CD4-positive, alpha-beta T cell (primary cell): ENCODE measurements at regions of chr6 and their contacts with region 1.

Region 1: DNA sequence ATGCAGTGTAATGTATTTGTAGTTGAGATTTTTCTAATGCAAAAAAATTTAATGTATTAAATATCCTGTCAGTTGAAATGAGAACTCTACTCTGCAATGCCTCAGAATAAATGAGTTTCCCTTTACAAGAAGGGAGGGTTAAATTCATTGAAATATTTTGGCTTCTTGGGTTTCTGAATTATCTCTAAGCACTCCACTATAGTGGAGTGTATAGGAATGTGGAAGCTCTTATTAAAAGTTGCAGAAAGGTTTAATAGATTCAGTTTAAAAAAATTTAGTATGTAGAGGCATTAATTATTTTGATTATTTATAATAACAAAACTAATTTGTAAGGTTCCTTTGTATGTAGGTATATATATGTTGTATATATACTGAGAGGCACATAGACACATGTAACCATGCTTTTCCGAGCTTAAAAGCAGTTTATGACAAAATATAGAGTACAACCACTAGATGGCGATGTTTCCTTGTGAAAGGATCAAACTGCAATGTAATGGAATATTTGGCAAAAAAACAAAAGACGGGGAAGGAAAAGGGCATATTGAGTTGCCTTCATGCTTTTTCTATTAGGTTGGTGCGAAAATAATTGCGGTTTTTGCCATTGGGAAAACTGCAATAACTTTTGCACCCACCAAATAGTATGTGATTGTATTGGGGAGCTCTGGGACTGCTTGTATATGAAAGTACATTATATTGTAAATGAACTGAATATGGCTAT is 144.2 kb downstream of the MYO6 start:
- DNase-seq: peak in 3 of 14 experiments; percentile 46 to 51 (median 48)
- ATAC-seq: no peak
- H3K4me3 ChIP-seq: no peak overlapping the region
- H3K4me3 Mint-ChIP-seq: no peak overlapping the region
- H3K27ac ChIP-seq: no peak overlapping the region
- H3K27ac Mint-ChIP-seq: no peak overlapping the region
- H3K4me1 ChIP-seq: no peaks in the 10 kb centered on the region
- H3K4me1 Mint-ChIP-seq: no peaks in the 10 kb centered on the region
- H3K27me3 ChIP-seq: no peaks in the 10 kb centered on the region
- H3K27me3 Mint-ChIP-seq: peaks cover 5% of the 10 kb centered on the region
- CTCF ChIP-seq: peak; percentile 77

Region 2: DNA sequence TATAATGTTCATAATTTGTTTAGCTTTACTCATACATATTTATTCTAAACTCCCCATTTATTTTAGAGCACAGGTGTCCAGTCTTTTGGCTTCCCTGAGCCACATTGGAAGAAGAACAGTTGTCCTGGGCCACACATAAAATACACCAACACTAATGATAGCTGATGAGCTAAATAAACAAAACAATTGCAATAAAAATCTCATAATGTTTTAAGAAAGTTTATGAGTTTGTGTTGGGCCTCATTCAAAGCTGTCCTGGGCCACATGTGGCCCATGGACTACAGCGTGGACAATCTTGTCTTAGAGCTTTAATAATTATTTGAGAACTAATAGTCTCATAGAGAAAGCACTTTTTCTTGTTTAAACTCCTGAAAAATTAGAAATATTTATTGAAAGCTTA is 12.9 kb before region 1 on chr6:
- CTCF ChIA-PET with region 1: interaction called, 11 read pairs
- POLR2A ChIA-PET with region 1: no interaction called
- intact Hi-C with region 1: no loop called
- DNase-seq: no peak
- ATAC-seq: no peak
- H3K4me3 ChIP-seq: no peak overlapping the region
- H3K4me3 Mint-ChIP-seq: no peak overlapping the region
- H3K27ac ChIP-seq: no peak overlapping the region
- H3K27ac Mint-ChIP-seq: no peak overlapping the region
- H3K4me1 ChIP-seq: no peaks in the 10 kb centered on the region
- H3K4me1 Mint-ChIP-seq: no peaks in the 10 kb centered on the region
- H3K27me3 ChIP-seq: no peaks in the 10 kb centered on the region
- H3K27me3 Mint-ChIP-seq: peaks cover 4% of the 10 kb centered on the region
- CTCF ChIP-seq: no peak

Region 3: DNA sequence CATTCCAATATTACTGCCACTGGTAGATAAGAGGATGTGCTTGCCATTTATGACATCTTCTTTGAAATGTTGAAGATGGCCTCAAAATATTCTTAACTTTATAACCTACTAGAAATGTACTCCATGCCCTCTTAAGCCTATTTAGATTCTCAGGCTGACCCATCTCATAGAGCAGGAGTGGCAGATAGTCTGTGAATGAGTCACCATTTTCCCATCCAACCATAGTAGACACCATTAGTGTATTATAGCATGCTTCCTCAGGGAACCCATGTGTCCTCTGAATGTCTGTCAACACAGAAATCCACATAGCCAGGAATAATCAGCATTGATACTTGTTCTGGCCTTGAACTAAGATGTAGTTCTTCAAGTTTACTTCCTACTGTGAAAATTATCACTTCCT is 29.0 kb after region 1 on chr6:
- CTCF ChIA-PET with region 1: no interaction called
- POLR2A ChIA-PET with region 1: no interaction called
- intact Hi-C with region 1: no loop called
- DNase-seq: no peak
- ATAC-seq: no peak
- H3K4me3 ChIP-seq: no peak overlapping the region
- H3K4me3 Mint-ChIP-seq: no peak overlapping the region
- H3K27ac ChIP-seq: no peak overlapping the region
- H3K27ac Mint-ChIP-seq: no peak overlapping the region
- H3K4me1 ChIP-seq: no peaks in the 10 kb centered on the region
- H3K4me1 Mint-ChIP-seq: no peaks in the 10 kb centered on the region
- H3K27me3 ChIP-seq: no peaks in the 10 kb centered on the region
- H3K27me3 Mint-ChIP-seq: peaks cover 9% of the 10 kb centered on the region
- CTCF ChIP-seq: no peak

Region 4: DNA sequence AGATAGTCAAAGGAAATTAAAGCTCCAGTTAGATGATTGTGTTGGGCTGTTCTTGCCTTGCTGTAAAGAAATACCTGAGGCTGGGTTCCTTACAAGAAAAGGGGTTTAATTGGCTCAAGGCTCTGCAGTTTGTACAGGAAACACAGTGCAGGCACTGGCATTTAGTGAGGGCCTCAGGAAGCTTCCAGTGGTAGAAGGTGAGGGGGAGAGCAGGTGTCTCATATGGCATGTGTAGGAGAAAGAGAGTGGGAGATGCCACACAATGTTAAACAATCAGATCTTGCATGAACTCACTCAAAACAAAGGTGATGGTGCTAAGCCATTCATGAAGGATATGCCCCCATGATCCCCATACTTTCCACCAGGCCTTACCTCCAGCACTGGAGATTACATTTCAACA is 672.7 kb after region 1 on chr6:
- CTCF ChIA-PET with region 1: no interaction called
- POLR2A ChIA-PET with region 1: no interaction called
- intact Hi-C with region 1: no loop called
- DNase-seq: no peak
- ATAC-seq: no peak
- H3K4me3 ChIP-seq: no peak overlapping the region
- H3K4me3 Mint-ChIP-seq: no peak overlapping the region
- H3K27ac ChIP-seq: no peak overlapping the region
- H3K27ac Mint-ChIP-seq: no peak overlapping the region
- H3K4me1 ChIP-seq: no peaks in the 10 kb centered on the region
- H3K4me1 Mint-ChIP-seq: no peaks in the 10 kb centered on the region
- H3K27me3 ChIP-seq: no peaks in the 10 kb centered on the region
- H3K27me3 Mint-ChIP-seq: no peaks in the 10 kb centered on the region
- CTCF ChIP-seq: no peak

Region 5: DNA sequence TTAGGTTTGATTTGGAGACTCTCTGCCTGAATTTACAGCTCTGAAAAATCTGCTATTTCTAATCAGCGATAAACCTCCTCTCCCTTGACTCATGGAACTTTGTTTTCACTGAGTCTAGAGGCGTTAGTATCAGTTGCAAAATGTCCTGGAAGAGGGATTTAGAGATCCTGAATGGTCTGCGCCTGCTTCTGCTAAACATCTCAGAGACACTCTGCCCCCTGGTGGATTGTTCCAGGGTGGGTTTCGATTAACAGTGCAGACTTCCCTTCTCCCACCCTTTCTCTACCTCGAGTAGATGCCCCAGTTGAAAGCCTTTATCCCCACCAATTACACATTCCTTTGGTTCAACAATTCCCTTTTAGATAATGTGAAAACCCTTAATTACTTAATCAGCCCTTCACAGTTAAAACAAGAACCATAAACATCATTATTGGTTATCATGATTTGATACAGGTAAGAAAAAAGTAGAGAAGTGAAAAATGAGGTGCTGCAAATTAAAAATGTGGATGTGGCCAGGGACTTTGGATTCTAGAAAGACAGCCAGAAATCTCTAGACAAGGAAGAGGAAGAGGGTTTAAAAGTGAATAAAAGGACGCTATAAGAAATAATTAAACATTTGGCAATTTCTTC is 1564.6 kb after region 1 on chr6:
- CTCF ChIA-PET with region 1: no interaction called
- POLR2A ChIA-PET with region 1: no interaction called
- intact Hi-C with region 1: loop called in 1 of 2 experiments (anchors 5 kb)
- DNase-seq: peak in 4 of 14 experiments; percentile 16 to 31 (median 20)
- ATAC-seq: no peak
- H3K4me3 ChIP-seq: no peak overlapping the region
- H3K4me3 Mint-ChIP-seq: no peak overlapping the region
- H3K27ac ChIP-seq: no peak overlapping the region
- H3K27ac Mint-ChIP-seq: no peak overlapping the region
- H3K4me1 ChIP-seq: peaks cover 2% of the 10 kb centered on the region
- H3K4me1 Mint-ChIP-seq: no peaks in the 10 kb centered on the region
- H3K27me3 ChIP-seq: peaks cover 13 to 14% of the 10 kb centered on the region in 2 experiments
- H3K27me3 Mint-ChIP-seq: peaks cover 35% of the 10 kb centered on the region
- CTCF ChIP-seq: peak; percentile 16